ENCODE measurements at regions of chr10 and their contacts with region 1.

Region 1: GRCh38 chr10:10996966-10997620 is 20.6 kb upstream of the CELF2 start:
- DNase-seq: peak; percentile 42
- H3K4me3 ChIP-seq: no peak overlapping the region
- H3K27ac ChIP-seq: no peak overlapping the region
- H3K4me1 ChIP-seq: peaks cover 0 to 14% (median 9%) of the 10 kb centered on the region in 4 donors
- H3K27me3 ChIP-seq: no peaks in the 10 kb centered on the region
- CTCF ChIP-seq: no peak
- EP300 ChIP-seq: no peak
- POLR2A ChIP-seq: no peak

Region 2: DNA sequence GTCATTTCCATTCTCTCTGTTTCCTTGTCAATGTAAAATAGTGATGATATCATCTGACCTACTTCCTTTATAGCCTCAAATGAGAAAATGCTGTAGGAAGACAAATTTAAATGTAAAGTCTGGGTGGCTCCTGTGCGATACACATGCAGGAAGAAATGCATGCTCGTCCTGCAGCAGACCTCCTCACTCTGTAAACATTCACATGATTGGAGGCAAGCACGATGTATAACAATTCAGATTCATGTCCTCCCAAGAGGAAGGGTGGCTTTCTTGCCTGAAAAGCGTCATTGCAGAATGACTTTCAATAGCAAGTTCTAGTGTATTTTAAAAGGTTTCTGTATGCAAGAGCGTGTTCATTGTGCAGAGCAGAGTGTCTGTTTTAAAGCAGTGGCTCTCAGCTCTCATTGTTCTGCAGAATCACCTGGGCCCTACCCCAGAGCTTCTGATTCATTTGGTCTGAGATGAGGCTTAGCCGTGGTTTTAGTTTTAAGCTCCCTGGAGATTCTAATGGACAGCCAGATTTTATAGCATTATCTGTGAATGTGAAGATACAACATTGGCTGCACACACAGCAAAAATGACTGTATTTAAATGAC is 149.7 kb before region 1 on chr10:
- intact Hi-C with region 1: no loop called
- DNase-seq: no peak
- H3K4me3 ChIP-seq: no peak overlapping the region
- H3K27ac ChIP-seq: no peak overlapping the region
- H3K4me1 ChIP-seq: peaks cover 4 to 38% (median 18%) of the 10 kb centered on the region in 4 donors
- H3K27me3 ChIP-seq: no peaks in the 10 kb centered on the region
- CTCF ChIP-seq: no peak
- EP300 ChIP-seq: no peak
- POLR2A ChIP-seq: no peak

Region 3: DNA sequence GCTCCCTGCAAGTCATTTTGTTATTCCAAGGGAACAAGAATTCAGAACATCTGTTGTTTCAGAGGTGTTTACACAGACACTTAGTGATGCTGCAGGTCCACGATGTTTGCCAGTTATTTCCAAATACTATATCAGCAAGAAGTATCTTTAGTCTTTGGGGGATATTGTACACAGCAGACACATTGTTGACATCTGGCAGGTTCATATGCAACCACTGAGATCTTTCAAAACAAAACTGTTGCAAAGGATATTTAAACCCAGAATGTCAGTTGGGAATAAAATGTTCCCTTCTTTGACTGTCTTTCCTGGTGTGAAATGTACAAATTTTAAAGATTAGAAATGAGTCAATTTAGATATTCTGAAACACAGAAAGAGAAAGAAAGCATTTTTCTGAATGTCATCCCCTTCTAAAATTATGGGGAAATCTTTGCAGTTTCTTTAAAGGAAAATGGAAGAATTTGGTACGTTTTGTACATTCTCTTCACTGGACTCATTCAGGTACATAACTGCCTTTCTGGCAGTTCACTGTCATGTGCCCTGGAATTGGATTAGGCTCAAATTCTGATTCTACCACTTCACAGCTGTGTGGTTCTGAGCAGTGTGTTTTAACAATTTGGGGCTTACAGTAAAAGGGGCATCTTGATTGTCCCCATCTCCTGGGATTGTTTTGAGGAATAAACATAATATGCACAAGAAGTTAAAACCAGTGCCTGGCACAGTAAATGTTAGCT is 19.7 kb before region 1 on chr10:
- intact Hi-C with region 1: loop called (anchors 1 kb)
- DNase-seq: no peak
- H3K4me3 ChIP-seq: no peak overlapping the region
- H3K27ac ChIP-seq: peak overlapping the region; percentile 15 to 61 (median 50)
- H3K4me1 ChIP-seq: peaks cover 6 to 36% (median 27%) of the 10 kb centered on the region in 4 donors
- H3K27me3 ChIP-seq: no peaks in the 10 kb centered on the region
- CTCF ChIP-seq: no peak
- EP300 ChIP-seq: no peak
- POLR2A ChIP-seq: no peak

Region 4: GRCh38 chr10:11205030-11205772 is 208.1 kb after region 1 on chr10:
- intact Hi-C with region 1: no loop called
- DNase-seq: no peak
- H3K4me3 ChIP-seq: no peak overlapping the region
- H3K27ac ChIP-seq: no peak overlapping the region
- H3K4me1 ChIP-seq: peaks cover 14 to 59% (median 33%) of the 10 kb centered on the region in 4 donors
- H3K27me3 ChIP-seq: no peaks in the 10 kb centered on the region
- CTCF ChIP-seq: no peak
- EP300 ChIP-seq: no peak
- POLR2A ChIP-seq: no peak

Measured in esophagus muscularis mucosa (tissue), 4 donors.